Left ventricle myocardium superior (tissue), 1 donor: ENCODE measurements at regions of chr5 and their contacts with region 1.

Region 1: DNA sequence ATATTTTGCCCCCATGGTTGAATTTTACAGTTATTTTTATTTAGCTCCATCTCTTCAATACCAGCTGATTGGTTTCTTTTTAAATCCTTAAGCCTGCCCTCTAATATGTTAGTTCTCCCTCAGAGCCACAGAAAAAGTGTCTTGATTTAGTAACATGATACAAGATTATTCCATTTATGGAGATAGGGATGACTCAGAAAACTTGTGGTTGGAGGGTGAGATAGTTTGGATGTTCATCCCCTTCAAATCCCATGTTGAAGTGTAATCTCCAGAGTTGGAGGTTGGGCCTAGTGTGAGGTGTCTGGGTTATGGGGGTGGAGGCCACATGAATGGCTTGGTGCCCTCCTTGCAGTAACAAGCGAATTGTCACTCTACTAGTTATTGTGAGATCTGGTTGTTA is 115.7 kb downstream of the FBXO38 start:
- DNase-seq: no peak
- ATAC-seq: no peak

Region 2: DNA sequence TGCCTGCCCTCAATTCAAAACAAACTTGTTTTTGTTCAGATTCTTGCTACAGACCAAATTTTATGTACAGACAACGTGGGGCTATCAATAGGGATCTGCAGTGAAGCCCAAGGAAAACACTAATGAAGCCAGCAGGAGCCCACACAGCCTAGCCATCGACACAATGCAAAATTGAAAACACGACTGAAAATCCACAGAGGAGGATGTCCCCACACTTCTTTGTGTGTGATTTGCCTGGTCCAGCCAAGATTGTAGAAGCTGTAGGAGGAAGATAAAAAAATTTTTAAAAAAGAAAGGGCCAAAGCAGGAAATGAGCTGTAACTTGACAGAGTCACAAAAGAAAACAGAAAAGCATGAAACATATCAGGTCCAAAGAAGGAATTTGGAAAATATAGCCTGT is 120.0 kb after region 1 on chr5:
- intact Hi-C with region 1: loop called (anchors 2 kb)
- DNase-seq: no peak
- ATAC-seq: peak; percentile 42

Region 3: DNA sequence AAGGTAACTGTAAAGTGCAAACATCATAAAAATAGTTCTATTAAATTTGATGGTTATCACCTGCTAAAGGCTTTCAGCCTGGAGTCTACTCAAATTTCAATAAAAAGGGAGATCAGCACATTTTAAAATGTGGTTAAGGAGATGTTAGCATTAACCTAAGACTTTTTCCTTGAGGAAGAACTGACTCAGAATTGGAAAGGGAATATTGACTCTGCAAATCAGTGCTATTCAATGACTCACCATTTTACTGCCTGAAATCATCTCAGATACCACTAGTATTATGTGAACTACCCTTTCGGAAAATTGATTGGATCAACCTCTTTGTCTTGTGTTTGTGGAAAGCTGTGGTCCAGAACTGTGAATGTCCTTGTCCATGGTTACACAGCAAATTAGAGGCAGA is 440.2 kb after region 1 on chr5:
- intact Hi-C with region 1: no loop called
- DNase-seq: no peak
- ATAC-seq: no peak